Dorsolateral prefrontal cortex (tissue), 120 donors: ENCODE measurements at regions of chr3 and their contacts with region 1.

Region 1: GRCh38 chr3:129514110-129514509 is 14.3 kb upstream of the RHO start:
- DNase-seq: peak in 1 of 10 donors; percentile 44
- H3K4me3 ChIP-seq: no peak overlapping the region
- H3K27ac ChIP-seq: peak overlapping the region in 10 of 59 donors; percentile 14 to 52 (median 35)
- H3K27me3 ChIP-seq: no peaks in the 10 kb centered on the region
- CTCF ChIP-seq: no peak

Region 2: DNA sequence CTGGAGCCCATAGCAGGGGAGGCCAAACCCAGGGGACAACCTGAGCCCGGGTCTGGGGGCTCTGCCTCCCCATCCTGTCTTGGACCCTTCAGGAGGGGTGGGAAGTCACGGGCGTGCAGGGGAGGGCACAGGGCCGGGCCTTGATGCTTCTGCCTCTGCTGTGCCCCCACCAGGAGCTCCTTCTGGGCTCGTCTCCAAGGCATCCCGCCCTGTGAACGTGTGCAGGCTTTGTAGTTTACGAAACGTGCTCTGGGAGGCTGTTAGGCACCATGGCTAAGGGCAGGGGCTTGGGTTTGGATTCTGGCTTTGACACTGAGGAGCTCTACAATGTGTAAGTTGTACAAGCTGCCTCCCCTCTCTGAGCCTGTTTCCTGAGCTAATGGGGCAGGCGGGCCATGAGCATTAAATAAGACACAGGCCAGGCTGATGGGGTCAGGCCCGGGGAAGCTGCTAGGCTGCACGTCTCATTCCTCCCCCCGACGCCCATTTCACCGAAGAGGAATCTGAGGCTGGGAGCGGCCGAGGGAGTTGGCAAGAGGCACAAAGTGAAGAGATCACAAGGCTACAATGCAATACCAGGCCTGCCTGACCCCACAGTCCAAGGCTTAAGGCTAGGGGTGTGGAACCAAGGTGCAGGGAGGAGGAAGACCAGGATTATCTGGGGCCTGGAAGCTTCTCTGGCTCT is 72.8 kb after region 1 on chr3:
- intact Hi-C with region 1: loop called in 1 of 2 experiments (anchors 5 kb)
- DNase-seq: no peak
- H3K4me3 ChIP-seq: no peak overlapping the region
- H3K27ac ChIP-seq: peak overlapping the region in 9 of 59 donors; percentile 4 to 57 (median 26)
- H3K27me3 ChIP-seq: no peaks in the 10 kb centered on the region
- CTCF ChIP-seq: no peak